ENCODE measurements at regions of chr18 and their contacts with region 1.

Region 1: GRCh38 chr18:31819106-31819924 is 58.6 kb upstream of the SLC25A52 start:
- DNase-seq: no peak
- H3K4me3 ChIP-seq: no peak overlapping the region
- H3K27ac ChIP-seq: no peak overlapping the region
- H3K4me1 ChIP-seq: peaks cover 0 to 7% (median 0%) of the 10 kb centered on the region in 3 donors
- H3K27me3 ChIP-seq: no peaks in the 10 kb centered on the region
- CTCF ChIP-seq: peak; percentile 43 to 80 (median 57)
- POLR2A ChIP-seq: no peak

Region 2: DNA sequence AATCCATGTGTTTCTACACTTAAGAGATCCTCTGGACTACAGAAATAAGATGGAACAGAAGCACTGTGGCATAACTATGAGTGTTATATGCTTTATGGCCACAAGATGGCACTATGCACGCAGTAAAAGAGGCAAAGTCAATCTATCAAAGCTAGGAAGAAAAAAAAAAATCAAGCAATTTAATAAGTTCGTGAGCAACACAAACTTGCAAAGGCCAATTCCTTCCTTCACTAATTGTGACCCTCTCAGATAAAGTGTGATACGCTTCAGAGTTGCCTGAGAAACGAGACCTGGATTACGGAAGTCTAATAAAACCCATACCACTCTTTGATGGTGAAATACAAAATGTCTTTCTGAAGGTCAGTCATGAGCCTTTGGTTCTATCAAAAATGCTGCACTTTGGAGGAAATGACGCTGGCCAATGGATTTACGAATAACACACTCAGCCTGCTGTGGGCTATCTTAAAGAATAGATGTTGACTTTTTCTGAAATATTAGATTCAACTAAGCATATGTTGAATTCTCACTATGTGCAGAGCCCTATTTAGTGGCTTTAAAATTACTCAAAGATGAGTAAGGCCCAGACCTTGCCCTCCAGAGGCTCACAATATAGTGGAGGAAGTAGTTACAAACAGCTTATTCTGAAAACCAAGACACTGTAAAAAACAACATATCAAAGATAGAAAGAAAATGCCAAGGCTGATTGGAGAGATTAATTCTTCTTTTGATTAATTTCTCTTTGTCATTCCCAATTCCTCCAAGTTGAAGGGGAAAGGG is 263.2 kb before region 1 on chr18:
- intact Hi-C with region 1: loop called (anchors 10 kb)
- DNase-seq: no peak
- H3K4me3 ChIP-seq: no peak overlapping the region
- H3K27ac ChIP-seq: no peak overlapping the region
- H3K4me1 ChIP-seq: no peaks in the 10 kb centered on the region
- H3K27me3 ChIP-seq: peaks cover 0 to 4% (median 0%) of the 10 kb centered on the region in 4 donors
- CTCF ChIP-seq: peak; percentile 59 to 83 (median 75)
- POLR2A ChIP-seq: no peak

Region 3: GRCh38 chr18:31576670-31577069 is 242.6 kb before region 1 on chr18:
- intact Hi-C with region 1: loop called (anchors 10 kb)
- DNase-seq: no peak
- H3K4me3 ChIP-seq: no peak overlapping the region
- H3K27ac ChIP-seq: no peak overlapping the region
- H3K4me1 ChIP-seq: peaks cover 0 to 4% (median 0%) of the 10 kb centered on the region in 3 donors
- H3K27me3 ChIP-seq: no peaks in the 10 kb centered on the region
- CTCF ChIP-seq: no peak
- POLR2A ChIP-seq: no peak

Region 4: DNA sequence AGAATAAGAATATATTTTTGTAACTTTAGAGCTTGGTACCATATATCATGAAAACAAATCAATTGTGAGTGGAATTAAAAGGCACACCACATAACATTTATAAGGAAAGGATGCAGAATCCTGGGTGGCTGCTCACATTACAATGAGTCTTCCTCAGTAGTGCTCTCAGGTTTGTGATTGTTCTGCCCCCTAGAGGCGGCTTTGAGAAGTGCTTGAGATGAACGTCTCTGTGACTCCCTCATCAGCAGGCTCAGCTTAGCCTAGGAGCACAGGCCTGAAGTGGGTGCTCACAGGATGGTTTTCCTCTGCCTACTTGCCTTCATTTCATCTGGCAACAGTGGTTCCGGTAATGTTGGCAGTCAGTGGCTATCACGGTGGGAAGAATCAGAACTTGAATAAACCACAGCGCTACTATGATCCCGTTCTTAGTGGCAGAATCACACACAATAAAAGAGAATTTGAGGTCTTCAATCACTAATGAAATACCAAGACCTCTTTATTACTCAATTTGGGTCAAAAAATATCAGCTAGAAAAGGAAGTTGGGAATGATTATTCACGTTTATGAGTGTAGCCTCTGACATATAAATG is 96.9 kb before region 1 on chr18:
- intact Hi-C with region 1: no loop called
- DNase-seq: no peak
- H3K4me3 ChIP-seq: no peak overlapping the region
- H3K27ac ChIP-seq: no peak overlapping the region
- H3K4me1 ChIP-seq: peaks cover 0 to 25% (median 2%) of the 10 kb centered on the region in 3 donors
- H3K27me3 ChIP-seq: no peaks in the 10 kb centered on the region
- CTCF ChIP-seq: peak; percentile 61 to 89 (median 80)
- POLR2A ChIP-seq: no peak

Region 5: GRCh38 chr18:31741097-31741735 is 78.1 kb before region 1 on chr18:
- intact Hi-C with region 1: loop called (anchors 5 kb)
- DNase-seq: no peak
- H3K4me3 ChIP-seq: no peak overlapping the region
- H3K27ac ChIP-seq: no peak overlapping the region
- H3K4me1 ChIP-seq: peaks cover 0 to 19% (median 5%) of the 10 kb centered on the region in 3 donors
- H3K27me3 ChIP-seq: no peaks in the 10 kb centered on the region
- CTCF ChIP-seq: peak; percentile 47 to 91 (median 85)
- POLR2A ChIP-seq: no peak

Region 6: DNA sequence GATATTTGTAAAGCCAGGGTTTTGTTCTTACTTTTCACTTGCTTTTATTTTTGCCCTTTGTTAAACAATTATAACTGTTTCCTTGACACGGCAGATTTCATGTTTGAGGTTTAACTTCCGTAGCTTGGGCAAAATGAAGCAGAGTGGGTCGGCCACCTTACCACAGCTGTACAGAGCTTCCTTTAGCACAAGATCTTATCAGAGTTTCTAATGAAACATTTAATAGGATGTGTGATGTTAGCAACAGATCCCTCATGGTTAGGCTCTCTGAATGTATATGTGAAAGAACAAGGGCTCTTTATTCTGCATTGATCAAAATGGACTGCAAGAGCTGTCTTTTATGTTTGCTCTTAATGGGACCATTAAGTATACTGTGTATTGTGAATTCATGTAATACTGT is 221.6 kb after region 1 on chr18:
- intact Hi-C with region 1: no loop called
- DNase-seq: no peak
- H3K4me3 ChIP-seq: no peak overlapping the region
- H3K27ac ChIP-seq: peak overlapping the region in 2 of 4 donors; percentile 16 to 35
- H3K4me1 ChIP-seq: no peaks in the 10 kb centered on the region
- H3K27me3 ChIP-seq: no peaks in the 10 kb centered on the region
- CTCF ChIP-seq: no peak
- POLR2A ChIP-seq: no peak

Region 7: DNA sequence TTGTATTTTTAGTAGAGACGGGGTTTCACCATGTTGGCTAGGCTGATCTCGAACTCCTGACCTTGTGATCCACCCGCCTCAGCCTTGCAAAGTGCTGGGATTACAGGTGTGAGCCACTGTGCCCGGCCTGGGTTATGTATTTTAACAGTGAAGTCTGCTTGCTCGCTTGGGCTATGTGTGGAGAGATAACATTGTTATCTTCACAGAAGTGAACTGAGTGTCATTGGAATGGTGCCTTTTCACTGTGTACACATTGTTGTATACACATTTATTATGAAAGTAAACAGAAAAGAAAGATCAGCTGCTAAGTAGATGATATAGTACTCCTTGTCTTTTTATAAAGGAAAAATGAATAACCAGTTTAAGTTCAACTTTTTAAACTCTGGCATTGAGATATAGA is 302.7 kb after region 1 on chr18:
- intact Hi-C with region 1: no loop called
- DNase-seq: no peak
- H3K4me3 ChIP-seq: no peak overlapping the region
- H3K27ac ChIP-seq: no peak overlapping the region
- H3K4me1 ChIP-seq: no peaks in the 10 kb centered on the region
- H3K27me3 ChIP-seq: no peaks in the 10 kb centered on the region
- CTCF ChIP-seq: no peak
- POLR2A ChIP-seq: no peak

Measured in esophagus squamous epithelium (tissue), 5 donors.